ENCODE measurements at regions of chr6 and their contacts with region 1.

Region 1: GRCh38 chr6:35014801-35015200 is 125.7 kb downstream of the ANKS1A start:
- DNase-seq: peak; percentile 19
- H3K4me3 ChIP-seq: no peak overlapping the region
- H3K27me3 ChIP-seq: no peaks in the 10 kb centered on the region
- CTCF ChIP-seq: no peak

Region 2: GRCh38 chr6:34819571-34820480 is 195.0 kb before region 1 on chr6:
- CTCF ChIA-PET with region 1: no interaction called
- POLR2A ChIA-PET with region 1: interaction called, 15 read pairs
- DNase-seq: no peak
- H3K4me3 ChIP-seq: no peak overlapping the region
- H3K27me3 ChIP-seq: no peaks in the 10 kb centered on the region
- CTCF ChIP-seq: no peak